Head of caudate nucleus (tissue), 42 donors: ENCODE measurements at regions of chr17 and their contacts with region 1.

Region 1: DNA sequence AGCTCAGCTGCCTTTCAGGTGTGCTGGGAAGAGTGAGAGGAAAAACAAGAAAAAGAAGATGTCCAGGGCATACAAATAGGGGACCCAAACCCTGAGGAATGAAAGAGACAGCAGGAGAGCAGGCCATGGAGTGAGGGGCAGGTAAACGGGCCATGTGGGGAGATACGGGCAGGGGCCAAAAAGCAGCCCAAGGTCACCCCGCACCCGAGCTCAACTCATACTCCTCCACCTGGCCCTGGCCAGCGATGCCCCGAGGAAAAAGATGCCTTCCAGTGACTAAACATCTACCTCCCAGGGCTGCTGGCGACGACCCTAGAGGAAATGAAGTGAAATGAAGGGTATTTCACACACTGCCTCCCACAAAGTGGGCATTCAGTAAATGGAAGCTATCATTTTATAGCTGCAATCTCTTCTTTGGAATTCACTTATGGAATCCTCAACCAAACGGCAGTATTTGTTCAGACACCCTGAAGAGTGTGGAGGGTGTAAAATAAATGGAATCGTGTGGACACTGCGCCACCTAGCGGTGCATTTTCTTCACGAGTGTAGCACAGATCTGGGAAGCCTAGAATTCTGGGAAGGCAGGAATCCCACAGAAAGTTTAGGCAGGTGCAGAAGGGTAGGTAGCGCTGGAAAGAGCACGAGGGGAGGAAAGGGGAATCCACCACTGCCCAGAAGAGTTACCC is 14.9 kb downstream of the ELAC2 start:
- DNase-seq: peak; percentile 65 to 94 (median 88)

Region 2: DNA sequence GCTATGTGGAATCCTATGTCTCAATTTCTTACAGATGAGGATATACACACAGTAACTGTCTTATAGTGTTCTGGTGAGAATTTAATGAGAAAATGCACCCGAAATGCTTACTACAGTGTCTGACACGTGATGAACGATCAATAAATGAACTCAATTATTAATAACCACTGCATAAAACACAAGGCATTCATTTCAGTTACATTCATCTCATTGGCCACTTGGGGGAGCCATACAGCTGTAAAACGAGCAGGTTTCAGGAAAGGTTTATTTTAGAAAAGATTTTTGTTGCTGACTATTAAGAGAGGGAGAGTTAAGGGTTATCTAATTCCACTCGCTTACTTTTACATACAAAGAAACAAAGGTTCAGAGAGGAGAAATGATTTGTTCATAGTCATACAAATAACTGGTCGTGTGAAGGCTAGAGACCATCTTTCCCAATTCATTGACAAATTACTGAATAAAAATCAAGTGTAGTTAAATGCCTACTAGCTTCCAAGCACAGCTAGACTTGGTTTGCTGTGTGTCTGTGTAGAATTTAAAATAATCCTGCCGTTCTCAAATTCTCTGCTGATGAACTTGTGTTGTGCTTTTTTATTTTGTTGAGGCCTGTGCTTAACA is 822.2 kb before region 1 on chr17:
- intact Hi-C with region 1: loop called (anchors 10 kb)
- DNase-seq: peak in 31 of 42 donors; percentile 6 to 78 (median 44)

Region 3: GRCh38 chr17:12911239-12911638 is 91.7 kb before region 1 on chr17:
- intact Hi-C with region 1: no loop called
- DNase-seq: no peak